ENCODE measurements at regions of chr2 and their contacts with region 1.

Region 1: DNA sequence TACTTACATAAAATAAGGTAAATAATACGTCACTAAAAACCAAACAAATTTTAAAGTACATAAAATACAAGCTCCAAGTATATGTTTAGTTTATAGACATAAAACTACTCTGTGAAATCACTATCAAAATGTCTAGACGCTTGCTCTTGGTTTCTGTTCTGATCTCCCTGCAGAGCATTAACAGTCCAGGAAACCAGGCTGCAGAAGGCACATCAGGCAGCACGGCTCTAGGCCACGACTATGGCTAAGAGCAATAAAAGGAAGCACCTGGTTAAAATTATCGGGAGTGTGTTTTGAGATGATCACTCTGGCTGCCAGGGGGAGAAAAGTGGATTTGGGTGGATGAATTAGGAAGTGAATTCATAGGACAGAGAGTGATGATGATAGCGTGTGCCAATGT is 196.0 kb upstream of the SPHKAP start:
- DNase-seq: no peak
- ATAC-seq: no peak

Region 2: DNA sequence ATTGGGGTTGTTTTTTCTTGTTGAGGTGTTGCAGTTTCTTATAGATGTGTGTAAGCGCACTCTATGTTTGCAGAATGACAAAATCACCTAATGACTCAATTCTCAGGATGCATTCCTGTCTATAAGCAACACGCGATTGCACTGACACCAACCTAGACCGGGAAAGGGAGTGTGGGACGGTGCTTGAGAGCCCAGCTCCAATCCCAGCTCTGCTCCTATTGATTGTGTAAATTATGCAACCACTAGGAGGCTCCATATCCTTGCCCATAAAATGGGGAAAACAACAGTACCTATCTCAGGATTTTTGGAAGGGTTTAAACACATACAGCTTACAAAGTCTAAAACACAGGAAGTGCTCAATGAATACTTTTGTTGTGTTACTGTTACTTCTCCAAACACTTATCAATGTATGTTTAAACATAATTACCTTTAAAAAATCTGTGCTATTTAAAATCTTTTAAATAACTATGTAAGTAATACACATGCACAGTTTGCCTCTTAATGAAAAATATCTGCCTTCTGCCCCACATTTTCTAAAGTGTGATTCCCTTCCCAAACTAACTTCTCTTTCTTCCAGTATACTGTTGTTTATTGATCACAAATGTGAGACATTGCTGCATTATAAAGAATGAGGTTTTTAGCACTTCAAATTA is 328.6 kb before region 1 on chr2:
- intact Hi-C with region 1: loop called (anchors 5 kb)
- DNase-seq: no peak
- ATAC-seq: peak; percentile 82

Measured in Right ventricle myocardium inferior (tissue), 1 donor.